ENCODE measurements at regions of chr6 and their contacts with region 1.

Region 1: GRCh38 chr6:36765594-36766398 is 68.2 kb downstream of the RAB44 start:
- DNase-seq: peak; percentile 89
- H3K4me3 Mint-ChIP-seq: no peak overlapping the region
- H3K27ac Mint-ChIP-seq: no peak overlapping the region
- H3K4me1 Mint-ChIP-seq: peaks cover 42% of the 10 kb centered on the region
- H3K27me3 Mint-ChIP-seq: no peaks in the 10 kb centered on the region

Region 2: DNA sequence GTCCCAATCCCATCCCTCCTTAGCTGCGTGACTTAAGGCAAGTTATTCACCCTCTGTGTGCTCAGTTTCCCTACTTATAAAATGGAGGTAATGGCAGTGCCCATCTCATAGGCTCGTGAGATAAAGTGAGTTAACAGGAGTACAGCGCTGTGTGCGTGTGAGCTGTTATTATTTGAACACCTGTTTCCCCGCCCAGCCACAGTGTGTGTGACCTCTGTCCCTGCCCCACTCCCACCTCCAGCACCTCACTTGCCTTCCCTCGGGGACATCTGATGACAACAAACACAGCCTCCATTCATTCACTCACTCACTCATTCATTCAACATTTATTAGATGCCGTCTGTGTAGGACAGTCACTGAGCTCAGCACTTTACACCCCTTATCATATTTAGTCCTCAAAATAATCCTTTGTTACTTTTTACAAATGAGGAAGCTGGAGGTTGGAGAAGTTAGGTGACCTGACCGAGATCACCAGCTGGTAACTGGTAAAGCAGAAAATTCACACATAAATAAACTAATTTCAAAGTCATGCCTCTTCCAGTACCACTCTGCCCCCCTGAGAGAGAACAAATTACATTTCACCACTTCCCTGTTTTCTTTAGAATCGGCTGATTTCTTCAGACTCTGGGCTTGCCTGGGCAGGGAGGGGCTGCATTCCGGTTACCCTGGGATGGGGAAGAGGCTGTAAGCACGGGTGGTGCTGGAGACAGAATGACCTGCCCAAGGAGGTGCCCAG is 14.8 kb after region 1 on chr6:
- CTCF ChIA-PET with region 1: interaction called, 157 read pairs
- POLR2A ChIA-PET with region 1: no interaction called
- DNase-seq: no peak
- H3K4me3 Mint-ChIP-seq: no peak overlapping the region
- H3K27ac Mint-ChIP-seq: no peak overlapping the region
- H3K4me1 Mint-ChIP-seq: peaks cover 12% of the 10 kb centered on the region
- H3K27me3 Mint-ChIP-seq: peaks cover 11% of the 10 kb centered on the region

Region 3: GRCh38 chr6:36851149-36851614 is 85.4 kb after region 1 on chr6:
- CTCF ChIA-PET with region 1: interaction called, 10 read pairs
- POLR2A ChIA-PET with region 1: no interaction called
- DNase-seq: peak; percentile 70
- H3K4me3 Mint-ChIP-seq: no peak overlapping the region
- H3K27ac Mint-ChIP-seq: no peak overlapping the region
- H3K4me1 Mint-ChIP-seq: peaks cover 4% of the 10 kb centered on the region
- H3K27me3 Mint-ChIP-seq: no peaks in the 10 kb centered on the region

Measured in activated CD4-positive, alpha-beta T cell treated with anti-CD3 and anti-CD28 coated beads, Interleukin-2, amount 10 ng/mL, durations not matched to agents 7 days and 5 days (primary cell).